ENCODE measurements at regions of chr9 and their contacts with region 1.

Region 1: DNA sequence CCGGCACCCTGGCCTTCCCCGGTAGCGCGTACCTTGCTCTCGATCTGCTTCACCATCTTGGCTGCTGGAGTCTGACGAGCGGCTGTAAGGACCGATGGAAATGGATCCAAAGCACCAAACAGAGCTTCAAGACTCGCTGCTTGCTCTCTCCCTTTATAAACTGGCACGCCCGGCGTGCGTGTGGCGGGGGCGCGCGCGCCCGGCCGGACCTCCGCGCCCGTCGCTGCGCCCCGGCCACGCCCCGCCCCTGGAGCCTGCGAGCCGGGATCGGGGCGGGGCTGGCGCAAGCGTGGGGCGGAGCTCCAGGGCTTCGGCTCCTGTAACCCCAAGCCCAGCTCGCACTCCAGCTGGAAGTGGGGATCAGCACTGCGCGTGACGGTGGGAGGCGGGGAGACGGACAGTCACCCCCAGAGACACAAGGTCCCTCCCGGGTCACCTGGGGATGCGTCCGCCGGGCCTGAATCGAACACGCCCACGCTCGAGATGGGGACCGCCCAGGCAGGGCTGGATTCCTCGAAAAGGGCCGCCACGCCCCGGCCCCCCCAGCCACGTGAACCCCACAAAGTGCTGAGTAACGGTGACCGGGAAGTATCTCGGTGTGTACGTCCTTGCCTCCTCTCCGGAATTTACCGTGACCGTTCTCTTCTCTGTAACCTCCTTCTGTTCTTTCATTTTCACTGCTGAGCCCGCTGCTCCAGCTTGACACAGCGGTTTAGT is at the start of gene TXN:
- DNase-seq: peak; percentile 91
- CTCF ChIP-seq: no peak

Region 2: DNA sequence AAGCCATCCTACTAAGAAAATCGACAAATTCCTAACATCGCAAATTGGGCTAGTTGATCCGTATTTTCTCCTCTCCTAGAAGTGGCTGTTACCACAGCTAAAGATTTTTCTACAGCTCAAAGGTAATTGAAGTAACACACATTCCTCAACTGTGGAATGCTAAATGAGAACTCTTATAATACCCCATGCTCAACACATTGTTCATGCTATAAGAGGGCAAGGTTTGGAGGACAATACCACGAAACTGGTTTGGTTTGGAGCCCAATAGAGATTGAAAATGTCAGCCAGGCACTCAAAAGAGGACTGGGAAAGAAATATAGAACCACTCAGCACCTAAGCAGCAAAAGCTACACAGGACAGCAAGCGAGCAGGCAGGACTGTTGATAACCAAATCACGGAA is 10.3 kb before region 1 on chr9:
- CTCF ChIA-PET with region 1: no interaction called
- POLR2A ChIA-PET with region 1: interaction called, 11 read pairs
- DNase-seq: no peak
- CTCF ChIP-seq: no peak

Region 3: DNA sequence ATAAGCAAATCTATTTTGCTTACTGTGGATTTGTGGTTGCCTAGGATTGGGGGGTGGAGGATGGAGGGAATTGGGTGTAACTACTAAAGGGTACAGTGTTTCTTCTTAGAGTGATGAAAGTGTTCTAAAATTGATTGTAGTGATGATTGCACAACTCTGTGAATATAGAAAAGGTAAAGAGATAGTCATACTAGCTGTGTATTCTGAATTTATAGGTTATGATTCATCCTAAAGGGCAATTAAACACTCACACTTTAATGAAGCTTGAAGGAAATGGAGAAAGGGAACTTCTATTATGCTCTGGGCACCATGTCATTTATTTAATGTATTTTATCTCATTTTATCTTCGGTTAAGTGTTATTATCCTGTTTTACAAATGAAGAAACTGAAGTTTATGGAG is 71.2 kb after region 1 on chr9:
- CTCF ChIA-PET with region 1: no interaction called
- POLR2A ChIA-PET with region 1: no interaction called
- DNase-seq: no peak
- CTCF ChIP-seq: no peak

Region 4: DNA sequence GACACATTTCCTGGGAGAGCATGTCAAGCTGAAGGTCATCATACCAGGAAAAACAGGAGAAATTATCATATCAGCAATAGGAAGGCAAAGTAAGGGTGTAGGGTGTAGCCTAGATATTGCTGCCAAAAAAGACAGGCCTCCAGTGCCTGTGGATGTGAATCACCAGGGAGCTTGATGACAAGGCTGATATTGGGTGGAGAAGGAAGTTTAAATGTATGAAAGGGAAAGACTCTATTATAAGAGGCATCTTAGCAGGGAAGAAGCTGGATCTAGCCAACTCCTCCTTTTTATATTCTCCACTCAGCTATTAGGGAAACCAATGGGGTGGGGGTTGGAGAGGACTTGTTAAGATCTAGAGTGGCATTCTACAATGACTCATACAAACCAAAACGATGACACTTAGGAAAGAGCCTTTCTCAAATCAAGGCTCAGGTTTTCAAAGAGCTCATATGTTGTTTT is 94.5 kb after region 1 on chr9:
- CTCF ChIA-PET with region 1: no interaction called
- POLR2A ChIA-PET with region 1: no interaction called
- DNase-seq: no peak
- CTCF ChIP-seq: no peak

Measured in GM10248 (cell line).